ENCODE measurements at regions of chr2 and their contacts with region 1.

Region 1: GRCh38 chr2:44167940-44168680 is 565 bp upstream of the PPM1B start:
- DNase-seq: peak; percentile 99
- ATAC-seq: peak; percentile 95

Region 2: DNA sequence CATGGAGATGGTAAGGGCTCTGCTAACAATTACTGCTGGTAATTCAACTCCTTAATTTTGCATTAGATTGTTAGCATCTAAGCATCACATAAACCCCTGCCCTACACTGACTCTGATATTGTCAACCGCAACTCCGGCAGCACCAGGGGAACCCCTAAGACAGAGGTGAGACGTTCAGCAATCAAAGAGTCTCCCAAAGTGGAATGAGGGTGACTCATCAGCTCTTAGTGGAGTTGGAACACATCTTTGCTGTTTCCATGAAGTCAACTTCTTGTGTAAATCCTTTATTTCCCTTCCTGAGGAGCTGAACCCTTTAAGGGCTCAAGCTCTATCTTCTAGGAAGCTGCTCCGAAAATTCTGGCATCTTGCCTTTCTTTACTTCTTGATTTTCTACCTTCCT is 277.3 kb before region 1 on chr2:
- intact Hi-C with region 1: no loop called
- DNase-seq: no peak
- ATAC-seq: no peak

Region 3: GRCh38 chr2:43995733-43996533 is 172.2 kb before region 1 on chr2 and contains the start of gene LRPPRC:
- intact Hi-C with region 1: loop called (anchors 5 kb)
- DNase-seq: peak; percentile 94
- ATAC-seq: peak; percentile 99
- total RNA-seq, gene LRPPRC: 83.9 TPM

Region 4: GRCh38 chr2:44218771-44219170 is 50.7 kb after region 1 on chr2:
- intact Hi-C with region 1: no loop called
- DNase-seq: no peak
- ATAC-seq: no peak

Region 5: GRCh38 chr2:45145073-45145899 is 977.2 kb after region 1 on chr2:
- intact Hi-C with region 1: no loop called
- DNase-seq: no peak
- ATAC-seq: no peak